ENCODE measurements at regions of chr10 and their contacts with region 1.

Region 1: DNA sequence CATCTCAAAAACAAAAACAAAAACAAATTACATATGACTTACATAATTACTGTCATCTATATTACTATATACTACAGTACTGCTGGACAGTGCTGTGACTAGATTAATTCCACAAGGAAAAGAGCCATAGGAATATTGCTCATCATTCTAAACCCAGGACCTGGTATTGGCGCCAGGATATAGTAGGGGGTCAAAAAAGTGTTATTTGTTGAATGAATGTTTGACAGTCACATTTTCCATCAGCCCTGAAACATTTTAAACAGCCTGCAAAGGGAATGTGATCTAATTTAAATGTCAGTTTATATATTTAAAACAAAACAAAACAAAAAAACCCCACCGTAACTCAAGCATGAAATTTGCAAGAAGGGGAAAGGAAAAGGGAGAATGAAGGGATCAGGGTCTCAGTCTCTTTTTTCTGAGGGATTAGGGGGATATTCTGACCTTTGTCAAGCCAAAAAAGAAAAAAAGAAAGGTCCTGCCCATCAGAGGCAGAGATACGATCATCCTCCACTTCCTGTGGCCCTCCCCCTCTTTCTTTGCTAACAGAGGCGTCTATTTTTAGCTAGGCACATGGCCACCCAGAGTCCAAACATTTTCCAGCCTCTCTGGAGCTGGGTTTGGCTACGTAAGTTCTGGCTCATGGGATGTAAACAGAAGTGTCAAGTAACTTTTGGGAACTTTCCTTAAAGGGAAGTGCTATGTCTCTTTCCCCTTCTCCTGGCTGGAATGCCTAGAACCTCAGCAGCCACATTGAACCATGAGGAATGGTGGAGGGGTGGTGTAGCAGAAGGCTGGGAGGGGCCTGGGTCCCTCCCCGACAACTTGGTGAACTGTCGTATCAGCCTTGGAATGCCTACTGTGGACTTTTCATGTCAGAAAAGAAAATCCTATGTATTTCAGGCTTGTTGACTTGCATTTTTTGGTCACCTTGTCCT is 44.6 kb upstream of the DLG5 start:
- DNase-seq: peak; percentile 77 to 91 (median 86)
- ATAC-seq: peak; percentile 78
- H3K4me3 ChIP-seq: no peak overlapping the region
- H3K27ac ChIP-seq: peak overlapping the region; percentile 96
- H3K4me1 ChIP-seq: peaks cover 21 to 27% of the 10 kb centered on the region in 2 experiments; a peak in 4 of 5 replicates
- H3K27me3 ChIP-seq: no peaks in the 10 kb centered on the region
- CTCF ChIP-seq: no peak
- EP300 ChIP-seq: peak; percentile 87
- POLR2A ChIP-seq: peak; percentile 76
- RAD21 ChIP-seq: peak; percentile 17 to 32; a peak in 3 of 4 replicates

Region 2: DNA sequence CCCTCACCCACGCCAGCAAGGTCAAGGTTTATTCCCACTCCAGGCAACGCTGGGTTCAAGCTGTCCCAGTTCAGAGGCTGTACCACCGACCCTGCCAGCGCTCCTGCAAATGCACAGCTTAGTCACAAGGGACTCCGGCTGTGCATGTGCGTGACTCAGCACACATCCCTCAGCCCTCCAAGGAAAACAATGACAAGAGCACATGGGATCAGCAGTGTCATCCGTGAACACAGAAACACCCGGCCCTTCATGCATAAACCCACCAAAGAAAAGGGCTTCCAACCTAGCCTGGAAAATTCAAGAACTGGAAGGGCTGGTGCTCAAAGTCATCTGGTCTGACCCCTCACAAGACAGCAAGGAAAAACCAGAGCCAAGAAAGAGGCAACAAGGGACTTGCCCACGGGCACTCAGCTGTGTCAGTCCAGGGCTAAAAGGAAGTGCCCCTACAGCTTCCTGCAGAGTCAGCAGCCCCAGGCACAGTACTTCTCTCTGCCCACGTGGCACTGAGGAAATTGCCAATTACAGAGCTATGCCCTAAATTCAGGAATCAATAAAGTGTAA is 439.6 kb before region 1 on chr10:
- CTCF ChIA-PET with region 1: no interaction called
- POLR2A ChIA-PET with region 1: no interaction called
- in situ Hi-C with region 1: no loop called
- intact Hi-C with region 1: no loop called
- DNase-seq: peak in 3 of 4 experiments; percentile 19 to 34 (median 30)
- ATAC-seq: peak; percentile 81
- H3K4me3 ChIP-seq: no peak overlapping the region
- H3K27ac ChIP-seq: no peak overlapping the region
- H3K4me1 ChIP-seq: peaks cover 0 to 5% of the 10 kb centered on the region in 2 experiments; a peak in 3 of 5 replicates
- H3K27me3 ChIP-seq: peaks cover 0 to 12% of the 10 kb centered on the region in 2 experiments; a peak in 2 of 5 replicates
- CTCF ChIP-seq: no peak
- EP300 ChIP-seq: no peak
- POLR2A ChIP-seq: no peak
- RAD21 ChIP-seq: no peak

Region 3: DNA sequence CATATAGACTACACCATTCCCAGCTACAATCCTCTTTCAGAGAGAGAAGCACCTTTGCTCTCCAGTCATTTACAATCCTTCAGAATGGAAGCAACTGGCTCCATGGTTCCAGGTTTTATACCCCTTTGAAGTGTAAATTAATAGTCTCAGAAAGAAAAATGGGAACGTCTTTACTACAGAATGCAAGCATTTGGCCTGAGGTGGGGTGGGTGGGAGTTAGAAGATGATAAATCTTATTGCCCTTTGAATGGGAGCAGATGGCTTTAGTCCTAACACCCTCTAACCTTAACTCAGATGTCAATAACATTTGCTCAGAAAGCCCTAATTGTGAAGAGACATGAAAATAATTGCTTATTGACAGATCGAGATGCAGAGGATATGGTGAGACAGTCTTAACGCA is 249.3 kb before region 1 on chr10:
- CTCF ChIA-PET with region 1: no interaction called
- POLR2A ChIA-PET with region 1: no interaction called
- in situ Hi-C with region 1: no loop called
- intact Hi-C with region 1: loop called (anchors 5 kb)
- DNase-seq: no peak
- ATAC-seq: no peak
- H3K4me3 ChIP-seq: no peak overlapping the region
- H3K27ac ChIP-seq: no peak overlapping the region
- H3K4me1 ChIP-seq: no peaks in the 10 kb centered on the region
- H3K27me3 ChIP-seq: 0 out of 5 replicates have a peak, but pooled peaks cover 0 to 4% of the 10 kb centered on the region in 2 experiments
- CTCF ChIP-seq: no peak
- EP300 ChIP-seq: no peak
- POLR2A ChIP-seq: no peak
- RAD21 ChIP-seq: no peak

Region 4: DNA sequence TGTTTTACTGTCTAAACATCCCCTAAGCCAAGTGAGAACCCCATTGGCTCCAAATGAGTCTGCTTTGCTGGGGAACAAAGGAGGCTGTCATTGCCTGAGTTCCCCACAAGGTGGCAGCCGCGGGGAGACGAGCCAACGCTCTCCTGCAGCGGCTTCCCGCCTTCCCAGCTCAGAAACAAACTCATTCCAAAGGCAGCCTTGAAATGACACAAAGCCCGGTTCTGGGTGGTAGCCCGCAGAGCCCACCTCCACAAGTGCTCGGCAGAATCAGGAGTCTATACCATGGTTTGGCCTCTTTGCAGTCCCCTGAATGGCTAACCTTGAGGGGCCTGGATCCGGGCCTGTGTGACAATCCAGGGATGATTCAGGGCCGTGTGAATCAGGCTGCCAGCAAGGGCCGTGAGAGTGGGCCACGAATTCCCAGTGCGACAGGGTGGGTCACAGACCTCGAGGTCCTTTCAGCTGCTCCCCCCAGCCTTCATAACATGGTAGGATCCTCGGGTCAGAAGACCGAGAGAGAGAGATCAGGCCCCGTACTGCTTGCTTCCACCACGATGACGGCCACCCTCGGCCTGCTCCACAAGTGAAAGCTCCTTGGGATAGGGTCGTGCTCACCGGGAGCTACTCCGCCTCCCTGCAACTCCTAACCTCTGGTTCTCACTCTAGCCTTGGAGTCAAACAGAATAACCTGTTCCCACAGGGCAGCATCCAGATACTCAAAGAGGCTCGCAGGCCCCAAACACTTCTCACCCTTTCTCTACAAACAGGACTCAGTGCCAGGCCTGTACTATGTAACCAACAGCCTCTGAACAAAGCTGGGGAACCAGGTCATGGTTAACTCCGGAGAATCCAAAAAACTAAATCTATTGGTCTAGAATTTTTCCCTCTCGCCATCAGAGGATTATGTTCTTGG is 124.2 kb before region 1 on chr10:
- CTCF ChIA-PET with region 1: interaction called, 16 read pairs
- POLR2A ChIA-PET with region 1: interaction called, 6 read pairs
- in situ Hi-C with region 1: no loop called
- intact Hi-C with region 1: loop called (anchors 1 kb)
- DNase-seq: peak; percentile 79 to 88 (median 84)
- ATAC-seq: peak; percentile 90
- H3K4me3 ChIP-seq: no peak overlapping the region
- H3K27ac ChIP-seq: no peak overlapping the region
- H3K4me1 ChIP-seq: peaks cover 13% of the 10 kb centered on the region in 2 experiments
- H3K27me3 ChIP-seq: no peaks in the 10 kb centered on the region
- CTCF ChIP-seq: peak; percentile 87 to 96 (median 93)
- EP300 ChIP-seq: no peak
- POLR2A ChIP-seq: no peak
- RAD21 ChIP-seq: peak; percentile 86 to 91

Region 5: GRCh38 chr10:77857254-77857653 is 113.9 kb before region 1 on chr10:
- CTCF ChIA-PET with region 1: no interaction called
- POLR2A ChIA-PET with region 1: interaction called, 6 read pairs
- in situ Hi-C with region 1: loop called (anchors 5 kb)
- intact Hi-C with region 1: no loop called
- DNase-seq: no peak
- ATAC-seq: peak; percentile 24; the same call in 2 of the 3 replicates
- H3K4me3 ChIP-seq: no peak overlapping the region
- H3K27ac ChIP-seq: no peak overlapping the region
- H3K4me1 ChIP-seq: peaks cover 0 to 3% of the 10 kb centered on the region in 2 experiments; a peak in 2 of 5 replicates
- H3K27me3 ChIP-seq: no peaks in the 10 kb centered on the region
- CTCF ChIP-seq: no peak
- EP300 ChIP-seq: no peak
- POLR2A ChIP-seq: no peak
- RAD21 ChIP-seq: no peak

Region 6: GRCh38 chr10:77889277-77889903 is 81.7 kb before region 1 on chr10:
- CTCF ChIA-PET with region 1: interaction called, 3 read pairs
- POLR2A ChIA-PET with region 1: interaction called, 3 read pairs
- in situ Hi-C with region 1: no loop called
- intact Hi-C with region 1: loop called (anchors 5 kb)
- DNase-seq: peak; percentile 52 to 85 (median 65)
- ATAC-seq: peak; percentile 94
- H3K4me3 ChIP-seq: no peak overlapping the region
- H3K27ac ChIP-seq: no peak overlapping the region
- H3K4me1 ChIP-seq: peaks cover 19 to 20% of the 10 kb centered on the region in 2 experiments
- H3K27me3 ChIP-seq: no peaks in the 10 kb centered on the region
- CTCF ChIP-seq: no peak
- EP300 ChIP-seq: no peak
- POLR2A ChIP-seq: no peak
- RAD21 ChIP-seq: no peak

Region 7: DNA sequence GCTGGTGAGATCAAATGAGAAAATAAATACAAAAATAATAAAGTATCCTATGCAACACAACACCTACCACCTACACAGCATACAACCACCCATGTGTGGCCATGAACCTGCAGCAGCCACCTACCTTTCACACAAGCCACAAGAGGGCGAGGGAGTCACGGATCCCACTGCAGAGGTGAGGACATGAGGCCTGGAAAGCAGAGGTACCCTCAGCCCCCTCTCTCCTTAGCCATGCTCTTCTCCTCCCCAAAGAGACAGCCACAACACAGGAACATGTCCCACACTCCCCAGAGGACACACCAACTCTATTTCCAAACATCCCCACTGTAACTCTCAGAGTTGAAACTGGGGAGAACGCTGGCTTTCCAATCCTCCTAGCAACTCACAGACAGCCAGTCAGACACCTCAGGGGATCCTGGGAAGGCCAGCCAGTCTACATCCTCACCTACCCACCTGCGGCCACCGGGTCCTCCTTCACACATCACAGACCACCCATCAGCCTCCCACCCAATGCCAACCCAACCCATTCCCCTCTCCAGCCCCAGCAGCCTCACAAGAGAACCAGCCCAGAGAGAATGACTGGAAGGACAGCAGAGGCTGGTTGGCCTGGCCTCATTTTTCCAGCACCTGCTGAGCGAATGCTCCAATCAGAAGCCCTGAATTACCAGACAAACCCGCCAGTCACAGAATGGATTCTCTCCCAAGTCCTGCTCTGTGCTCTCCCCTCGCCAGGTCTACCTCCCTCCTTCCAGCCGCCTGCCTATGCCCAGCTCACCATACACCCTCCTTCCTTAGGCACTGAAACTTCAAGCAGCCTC is 63.0 kb before region 1 on chr10:
- CTCF ChIA-PET with region 1: interaction called, 3 read pairs
- POLR2A ChIA-PET with region 1: interaction called, 5 read pairs
- in situ Hi-C with region 1: loop called (anchors 5 kb)
- intact Hi-C with region 1: loop called (anchors 1 kb)
- DNase-seq: peak; percentile 73 to 85 (median 73)
- ATAC-seq: peak; percentile 82
- H3K4me3 ChIP-seq: no peak overlapping the region
- H3K27ac ChIP-seq: peak overlapping the region; percentile 79
- H3K4me1 ChIP-seq: peaks cover 54 to 68% of the 10 kb centered on the region in 2 experiments
- H3K27me3 ChIP-seq: no peaks in the 10 kb centered on the region
- CTCF ChIP-seq: peak; percentile 78 to 87 (median 82)
- EP300 ChIP-seq: peak; percentile 18; the same call in 1 of the 2 replicates
- POLR2A ChIP-seq: no peak
- RAD21 ChIP-seq: peak; percentile 65 to 85

Region 8: DNA sequence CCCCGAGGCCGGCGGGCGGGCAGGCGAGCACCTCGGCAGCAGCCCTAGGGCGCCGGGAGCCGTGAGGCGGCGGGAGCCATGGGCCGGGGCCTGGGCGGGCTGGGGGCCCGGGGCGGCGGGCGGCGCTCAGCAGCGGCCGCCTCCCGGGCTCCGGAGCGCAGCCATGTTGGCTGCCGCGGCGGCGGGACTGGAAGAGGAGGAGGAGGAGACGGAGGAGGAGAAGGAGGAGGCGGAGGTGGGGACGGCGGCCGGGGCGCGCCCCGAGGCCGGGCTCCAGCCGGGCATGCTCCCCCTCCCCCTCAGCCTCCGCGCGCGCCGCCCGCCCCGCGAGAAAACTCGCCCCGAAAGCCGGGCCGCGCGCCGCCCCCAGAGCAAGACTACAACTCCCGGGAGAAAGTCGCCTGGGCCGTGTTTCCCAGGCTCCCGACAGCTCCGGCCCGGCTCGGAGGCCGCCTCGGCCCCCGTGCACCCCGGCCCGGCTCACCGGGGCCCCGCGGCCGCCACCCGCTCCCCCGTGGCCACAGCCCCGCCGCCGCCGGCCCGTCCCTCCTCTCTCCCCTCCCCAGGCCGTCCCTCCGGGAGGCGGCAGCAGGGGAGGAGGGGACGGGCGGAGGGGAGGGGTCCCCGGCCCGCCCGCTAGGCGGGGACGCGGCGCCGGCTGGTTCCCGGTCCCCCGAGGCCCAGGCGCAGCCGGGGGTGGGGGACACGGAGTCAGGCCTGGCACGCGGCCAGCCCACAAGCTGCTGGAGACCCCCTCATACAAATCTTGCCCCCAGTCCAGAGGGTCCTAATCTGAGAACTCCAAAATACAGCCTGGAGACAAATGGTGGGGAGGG is 44.4 kb before region 1 on chr10 and contains the start of gene DLG5:
- CTCF ChIA-PET with region 1: no interaction called
- POLR2A ChIA-PET with region 1: interaction called, 5 read pairs
- in situ Hi-C with region 1: no loop called
- intact Hi-C with region 1: loop called (anchors 5 kb)
- DNase-seq: peak; percentile 80 to 91 (median 86)
- ATAC-seq: peak; percentile 64
- H3K4me3 ChIP-seq: peak within 1 kb of the TSS; percentile 71
- H3K27ac ChIP-seq: peak within 1 kb of the TSS; percentile 75
- H3K4me1 ChIP-seq: peaks cover 34 to 36% of the 10 kb centered on the region in 2 experiments; a peak in 4 of 5 replicates
- H3K27me3 ChIP-seq: no peaks in the 10 kb centered on the region
- CTCF ChIP-seq: no peak
- EP300 ChIP-seq: no peak
- POLR2A ChIP-seq: no peak
- RAD21 ChIP-seq: 0 out of 4 replicates have a peak, but pooled peaks of 1 of the 2 experiments have one; percentile 9
- polyA plus RNA-seq, gene DLG5: 1.4 to 1.5 TPM

Region 9: DNA sequence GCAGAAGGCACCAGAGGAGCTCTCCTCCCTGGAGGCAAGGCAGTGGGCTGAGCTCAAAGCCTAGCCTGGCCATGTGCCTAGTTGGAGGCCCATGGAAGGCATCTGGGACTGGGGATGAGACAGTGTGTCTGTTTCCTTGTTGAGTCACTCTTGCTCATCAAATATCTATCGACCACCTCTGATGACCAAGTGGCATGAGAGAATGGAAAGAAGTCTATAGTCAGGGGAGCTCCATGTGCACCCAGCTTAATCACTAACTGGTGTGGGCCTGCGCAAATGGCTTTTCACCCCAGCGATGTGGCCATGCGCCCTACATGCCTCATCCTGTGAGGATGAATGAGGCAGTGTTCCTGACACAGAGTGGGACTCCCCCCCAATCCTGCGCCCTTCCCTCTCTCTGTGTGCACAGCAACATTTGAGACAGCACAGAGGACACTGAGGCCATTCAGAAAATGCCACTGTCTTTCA is 292.4 kb after region 1 on chr10:
- CTCF ChIA-PET with region 1: no interaction called
- POLR2A ChIA-PET with region 1: no interaction called
- in situ Hi-C with region 1: no loop called
- intact Hi-C with region 1: no loop called
- DNase-seq: no peak
- ATAC-seq: no peak
- H3K4me3 ChIP-seq: no peak overlapping the region
- H3K27ac ChIP-seq: no peak overlapping the region
- H3K4me1 ChIP-seq: no peaks in the 10 kb centered on the region
- H3K27me3 ChIP-seq: peaks cover 3 to 39% of the 10 kb centered on the region in 2 experiments; a peak in 3 of 5 replicates
- CTCF ChIP-seq: no peak
- EP300 ChIP-seq: no peak
- POLR2A ChIP-seq: no peak
- RAD21 ChIP-seq: no peak

Measured in K562 (cell line).